CD4-positive, alpha-beta memory T cell (primary cell): ENCODE measurements at regions of chr14 and their contacts with region 1.

Region 1: DNA sequence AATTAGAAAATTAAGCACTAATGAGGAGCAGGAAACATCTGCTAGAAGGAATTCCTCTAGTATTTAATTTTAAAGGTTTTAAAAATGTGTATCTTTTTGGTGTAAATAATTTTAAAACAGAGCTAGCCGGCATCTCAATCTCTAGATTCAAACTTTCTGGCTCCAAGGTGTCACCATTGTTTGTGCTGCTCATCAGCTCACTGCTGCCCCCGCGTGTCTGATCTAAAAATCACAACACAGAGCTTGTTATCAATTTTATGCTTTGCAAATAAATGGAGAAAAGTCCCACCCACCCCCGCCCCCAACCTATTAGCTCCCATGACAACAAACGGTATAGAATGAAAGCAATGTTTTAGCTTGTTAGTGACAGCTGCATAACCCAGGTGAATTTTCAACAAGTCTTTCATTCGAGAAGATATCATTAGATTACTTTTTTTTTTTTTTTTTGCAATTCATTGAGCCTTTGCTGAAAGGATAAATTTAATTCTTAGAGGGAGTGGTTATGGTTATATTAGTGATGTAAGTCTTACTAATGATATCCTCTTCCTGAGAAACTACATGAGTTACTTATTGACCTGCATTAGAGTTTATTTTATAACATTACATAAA is 11.3 kb upstream of the ABHD12B start:
- DNase-seq: peak; percentile 82 to 89 (median 86)
- H3K4me3 ChIP-seq: peak overlapping the region; percentile 67 to 84
- H3K4me3 Mint-ChIP-seq: peak overlapping the region; percentile 88 to 95 (median 94)
- H3K27ac ChIP-seq: peak overlapping the region; percentile 40
- H3K27ac Mint-ChIP-seq: peak overlapping the region; percentile 78 to 93 (median 91)
- H3K4me1 ChIP-seq: peaks cover 13% of the 10 kb centered on the region
- H3K4me1 Mint-ChIP-seq: peaks cover 2 to 16% (median 9%) of the 10 kb centered on the region in 4 donors
- H3K27me3 ChIP-seq: no peaks in the 10 kb centered on the region
- H3K27me3 Mint-ChIP-seq: no peaks in the 10 kb centered on the region

Region 2: DNA sequence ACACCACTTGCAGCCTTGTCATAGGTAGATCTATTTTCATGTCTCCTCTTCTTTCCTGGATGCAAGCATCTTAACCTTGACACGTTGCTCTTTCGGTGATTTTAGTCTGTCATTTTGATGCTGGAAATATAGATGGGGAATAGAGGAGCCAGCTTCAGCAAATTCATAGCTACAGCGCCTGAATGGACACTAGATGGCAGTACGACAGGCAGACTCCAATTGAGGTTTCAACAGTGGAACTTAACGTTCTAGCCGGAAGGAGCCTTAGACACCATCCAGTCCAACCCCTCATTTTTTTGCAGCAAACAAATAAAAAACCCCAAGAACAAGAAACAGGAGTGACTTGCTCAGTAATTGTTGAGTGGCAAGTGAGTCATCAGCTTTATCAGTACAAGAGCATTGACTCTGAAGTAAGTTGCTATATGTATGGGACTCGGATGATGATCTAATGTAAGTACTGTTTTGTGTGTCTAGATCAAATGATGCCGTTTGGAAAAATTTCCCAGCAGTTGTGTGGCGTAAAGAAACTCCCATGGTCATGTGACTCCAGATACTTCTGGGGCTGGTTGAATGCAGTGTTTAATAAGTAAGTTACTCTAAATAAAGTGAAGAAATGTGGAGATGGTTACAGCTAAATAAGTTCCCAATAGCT is 539.4 kb before region 1 on chr14:
- CTCF ChIA-PET with region 1: interaction called, 13 read pairs
- POLR2A ChIA-PET with region 1: no interaction called
- intact Hi-C with region 1: loop called (anchors 2 kb)
- DNase-seq: peak; percentile 80 to 89 (median 84)
- H3K4me3 ChIP-seq: no peak overlapping the region
- H3K4me3 Mint-ChIP-seq: no peak overlapping the region
- H3K27ac ChIP-seq: peak overlapping the region; percentile 56
- H3K27ac Mint-ChIP-seq: no peak overlapping the region
- H3K4me1 ChIP-seq: peaks cover 17% of the 10 kb centered on the region
- H3K4me1 Mint-ChIP-seq: peaks cover 4 to 20% (median 17%) of the 10 kb centered on the region in 4 donors
- H3K27me3 ChIP-seq: no peaks in the 10 kb centered on the region
- H3K27me3 Mint-ChIP-seq: no peaks in the 10 kb centered on the region

Region 3: DNA sequence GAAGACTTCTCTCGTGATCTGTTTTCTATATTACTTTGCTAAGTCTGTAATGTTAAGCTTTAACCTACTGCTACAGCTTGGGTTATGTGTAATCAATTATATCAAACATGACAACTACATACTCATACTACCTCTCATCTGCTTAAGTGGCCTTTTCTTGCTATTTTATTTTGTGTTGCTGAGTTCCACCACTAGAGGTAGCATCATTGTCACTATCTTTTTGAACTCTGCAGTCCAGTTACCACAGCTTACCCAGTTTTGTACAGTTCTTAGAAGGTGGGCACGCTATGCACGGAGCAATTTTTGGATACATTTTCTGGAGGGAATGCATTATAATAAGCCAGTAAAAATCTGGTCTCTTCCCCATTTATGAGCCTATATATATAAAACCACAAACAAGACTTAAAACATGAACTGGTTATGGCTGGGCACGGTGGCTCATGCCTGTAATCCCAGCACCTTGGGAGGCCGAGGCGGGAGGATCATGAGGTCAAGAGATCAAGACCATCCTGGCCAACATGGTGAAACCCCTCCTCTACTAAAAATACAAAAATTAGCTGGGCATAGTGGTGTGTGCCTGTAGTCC is 240.9 kb before region 1 on chr14:
- CTCF ChIA-PET with region 1: interaction called, 18 read pairs
- POLR2A ChIA-PET with region 1: no interaction called
- intact Hi-C with region 1: loop called (anchors 1 kb)
- DNase-seq: peak in 3 of 5 donors; percentile 9 to 16 (median 12)
- H3K4me3 ChIP-seq: no peak overlapping the region
- H3K4me3 Mint-ChIP-seq: no peak overlapping the region
- H3K27ac ChIP-seq: no peak overlapping the region
- H3K27ac Mint-ChIP-seq: peak overlapping the region in 1 of 7 donors; percentile 44
- H3K4me1 ChIP-seq: no peaks in the 10 kb centered on the region
- H3K4me1 Mint-ChIP-seq: no peaks in the 10 kb centered on the region
- H3K27me3 ChIP-seq: no peaks in the 10 kb centered on the region
- H3K27me3 Mint-ChIP-seq: no peaks in the 10 kb centered on the region

Region 4: DNA sequence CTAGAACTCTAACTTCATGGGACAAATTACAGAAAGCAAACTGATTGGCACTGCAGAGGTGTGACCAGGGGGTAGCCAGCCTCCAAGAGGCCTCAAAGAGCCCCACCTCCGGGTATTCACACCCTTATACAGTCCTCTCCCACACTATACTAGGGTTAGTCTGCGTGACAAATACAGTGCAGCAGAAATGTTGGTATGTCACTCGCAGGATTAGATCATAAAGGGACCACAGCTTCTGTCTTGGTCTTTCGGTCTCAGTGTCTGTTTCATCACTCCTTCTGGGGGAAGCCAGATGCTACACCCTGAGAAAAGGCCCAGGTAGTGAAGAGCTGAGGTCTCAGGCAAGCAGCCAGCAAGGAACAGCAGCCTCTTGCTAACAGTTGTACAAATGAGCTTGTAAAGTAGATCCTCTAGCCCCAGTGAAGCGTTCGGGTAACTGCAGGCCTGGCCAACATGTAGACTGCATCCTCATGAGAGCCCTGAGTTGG is 123.6 kb before region 1 on chr14:
- CTCF ChIA-PET with region 1: interaction called, 14 read pairs
- POLR2A ChIA-PET with region 1: no interaction called
- intact Hi-C with region 1: loop called (anchors 5 kb)
- DNase-seq: no peak
- H3K4me3 ChIP-seq: no peak overlapping the region
- H3K4me3 Mint-ChIP-seq: no peak overlapping the region
- H3K27ac ChIP-seq: no peak overlapping the region
- H3K27ac Mint-ChIP-seq: peak overlapping the region in 6 of 7 donors; percentile 41 to 65 (median 48)
- H3K4me1 ChIP-seq: peaks cover 12% of the 10 kb centered on the region
- H3K4me1 Mint-ChIP-seq: peaks cover 3 to 9% (median 7%) of the 10 kb centered on the region in 4 donors
- H3K27me3 ChIP-seq: no peaks in the 10 kb centered on the region
- H3K27me3 Mint-ChIP-seq: no peaks in the 10 kb centered on the region

Region 5: DNA sequence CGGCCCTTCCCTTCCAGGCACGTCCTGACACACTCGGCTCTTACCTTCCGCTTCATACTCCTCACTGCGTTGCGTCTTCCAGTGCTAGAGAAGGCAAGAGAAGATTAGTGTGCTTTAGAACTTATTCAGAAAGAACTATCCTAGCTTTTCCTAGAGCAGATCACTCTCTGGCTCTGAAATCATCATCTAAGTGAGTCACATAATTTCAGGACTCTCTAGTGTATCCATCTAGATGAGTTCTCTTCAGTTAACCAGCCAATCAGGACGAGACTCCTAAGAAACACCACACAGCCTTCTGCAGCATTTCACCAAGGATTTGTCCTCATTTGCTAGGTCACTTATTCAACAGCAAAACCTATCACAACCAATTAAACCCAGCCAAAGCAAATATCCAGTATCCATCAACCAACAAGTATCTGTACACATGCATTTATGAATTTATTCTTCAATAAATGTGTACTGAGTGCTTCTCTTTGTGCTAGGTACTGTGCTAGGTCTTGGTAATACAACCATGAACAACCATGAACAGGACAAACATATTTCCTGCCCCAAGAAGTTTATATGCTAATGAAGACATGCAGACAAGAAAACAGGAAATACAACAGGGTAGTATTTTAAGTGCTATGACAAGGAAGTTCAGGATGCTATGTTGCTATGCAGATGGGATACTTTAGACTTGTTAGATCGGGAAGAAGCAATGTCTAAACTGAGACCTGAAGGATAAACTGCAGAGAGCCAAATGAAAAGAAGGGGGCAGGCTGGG is 81.7 kb before region 1 on chr14:
- CTCF ChIA-PET with region 1: interaction called, 225 read pairs
- POLR2A ChIA-PET with region 1: interaction called, 31 read pairs
- intact Hi-C with region 1: loop called (anchors 1 kb)
- DNase-seq: no peak
- H3K4me3 ChIP-seq: no peak overlapping the region
- H3K4me3 Mint-ChIP-seq: peak overlapping the region in 4 of 8 donors; percentile 7 to 77 (median 46)
- H3K27ac ChIP-seq: no peak overlapping the region
- H3K27ac Mint-ChIP-seq: peak overlapping the region; percentile 6 to 93 (median 82)
- H3K4me1 ChIP-seq: peaks cover 47% of the 10 kb centered on the region
- H3K4me1 Mint-ChIP-seq: peaks cover 34 to 73% (median 45%) of the 10 kb centered on the region in 4 donors
- H3K27me3 ChIP-seq: no peaks in the 10 kb centered on the region
- H3K27me3 Mint-ChIP-seq: no peaks in the 10 kb centered on the region

Region 6: GRCh38 chr14:50813544-50813863 is 47.1 kb before region 1 on chr14:
- CTCF ChIA-PET with region 1: interaction called, 52 read pairs
- POLR2A ChIA-PET with region 1: interaction called, 3 read pairs
- intact Hi-C with region 1: no loop called
- DNase-seq: peak; percentile 50 to 64 (median 58)
- H3K4me3 ChIP-seq: no peak overlapping the region
- H3K4me3 Mint-ChIP-seq: peak overlapping the region; percentile 77 to 92 (median 86)
- H3K27ac ChIP-seq: no peak overlapping the region
- H3K27ac Mint-ChIP-seq: peak overlapping the region; percentile 70 to 95 (median 86)
- H3K4me1 ChIP-seq: peaks cover 37% of the 10 kb centered on the region
- H3K4me1 Mint-ChIP-seq: peaks cover 40 to 69% (median 53%) of the 10 kb centered on the region in 4 donors
- H3K27me3 ChIP-seq: no peaks in the 10 kb centered on the region
- H3K27me3 Mint-ChIP-seq: no peaks in the 10 kb centered on the region

Region 7: DNA sequence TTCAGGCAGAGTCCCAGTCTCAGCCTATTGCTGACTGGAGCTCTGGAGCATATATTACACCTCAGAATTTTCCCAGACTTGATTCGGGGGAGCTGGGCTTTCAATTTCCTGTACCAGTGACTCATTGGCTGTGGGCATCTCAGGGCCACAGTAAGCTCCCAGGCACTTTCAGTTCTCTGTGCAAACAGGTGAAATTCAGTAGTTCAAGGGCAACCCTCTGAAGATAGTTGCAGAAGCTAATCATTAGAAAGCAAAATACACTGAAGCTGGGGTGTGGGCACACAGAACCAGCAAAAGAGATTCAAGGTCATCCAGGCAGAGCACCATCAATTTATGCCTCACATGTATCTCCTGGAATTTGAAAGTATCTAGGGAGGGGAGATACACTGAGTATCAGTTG is 21.5 kb before region 1 on chr14:
- CTCF ChIA-PET with region 1: interaction called, 25 read pairs
- POLR2A ChIA-PET with region 1: interaction called, 5 read pairs
- intact Hi-C with region 1: no loop called
- DNase-seq: no peak
- H3K4me3 ChIP-seq: no peak overlapping the region
- H3K4me3 Mint-ChIP-seq: no peak overlapping the region
- H3K27ac ChIP-seq: no peak overlapping the region
- H3K27ac Mint-ChIP-seq: no peak overlapping the region
- H3K4me1 ChIP-seq: peaks cover 14% of the 10 kb centered on the region
- H3K4me1 Mint-ChIP-seq: peaks cover 14 to 20% (median 16%) of the 10 kb centered on the region in 4 donors
- H3K27me3 ChIP-seq: no peaks in the 10 kb centered on the region
- H3K27me3 Mint-ChIP-seq: no peaks in the 10 kb centered on the region

Region 8: DNA sequence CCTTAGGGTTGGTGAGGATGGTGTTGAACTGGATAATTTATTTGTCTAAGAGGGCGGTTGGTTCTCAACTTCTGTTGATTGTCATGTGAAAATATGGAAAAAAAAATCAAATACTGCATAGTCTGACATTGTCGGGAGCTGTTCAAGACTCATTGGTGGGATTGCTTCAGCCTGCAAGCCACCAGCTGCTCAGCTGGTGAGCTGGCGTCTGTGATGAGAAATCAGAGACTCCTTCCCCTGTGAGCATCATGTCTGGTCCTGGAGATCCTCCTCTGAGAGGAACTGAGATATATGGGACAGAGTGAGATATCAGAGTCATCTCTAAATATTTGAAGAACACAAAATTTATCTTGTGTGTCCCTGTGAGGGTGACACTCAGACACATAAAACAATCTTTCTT is 184.4 kb after region 1 on chr14:
- CTCF ChIA-PET with region 1: no interaction called
- POLR2A ChIA-PET with region 1: no interaction called
- intact Hi-C with region 1: no loop called
- DNase-seq: no peak
- H3K4me3 ChIP-seq: no peak overlapping the region
- H3K4me3 Mint-ChIP-seq: no peak overlapping the region
- H3K27ac ChIP-seq: no peak overlapping the region
- H3K27ac Mint-ChIP-seq: no peak overlapping the region
- H3K4me1 ChIP-seq: no peaks in the 10 kb centered on the region
- H3K4me1 Mint-ChIP-seq: no peaks in the 10 kb centered on the region
- H3K27me3 ChIP-seq: no peaks in the 10 kb centered on the region
- H3K27me3 Mint-ChIP-seq: peaks cover 4 to 7% of the 10 kb centered on the region in 2 donors